ENCODE measurements at regions of chr1 and their contacts with region 1.

Region 1: GRCh38 chr1:62870148-62870547 is 86.2 kb downstream of the ATG4C start:
- DNase-seq: no peak
- H3K4me3 ChIP-seq: no peak overlapping the region
- H3K27ac ChIP-seq: no peak overlapping the region
- H3K4me1 ChIP-seq: no peaks in the 10 kb centered on the region
- H3K27me3 ChIP-seq: no peaks in the 10 kb centered on the region
- CTCF ChIP-seq: no peak

Region 2: DNA sequence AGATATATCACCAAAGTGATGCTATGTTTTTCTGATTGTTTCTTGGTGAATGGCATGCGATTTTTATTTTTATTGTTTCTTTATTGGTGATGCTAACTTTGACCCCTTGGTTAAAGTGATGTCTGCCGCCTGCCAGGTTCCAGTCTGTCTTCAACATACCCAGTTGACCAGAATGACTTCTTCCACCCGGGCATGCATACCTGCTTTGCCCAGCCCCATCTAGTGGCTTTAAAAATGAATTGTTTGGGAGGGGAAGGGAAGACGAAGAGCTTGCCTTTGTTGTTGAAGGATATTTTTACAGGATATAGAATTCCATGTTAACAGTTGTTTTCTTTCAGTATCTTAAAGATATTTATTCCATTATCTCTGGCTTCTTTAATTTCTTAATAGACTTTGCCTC is 21.1 kb before region 1 on chr1:
- CTCF ChIA-PET with region 1: interaction called, 3 read pairs
- POLR2A ChIA-PET with region 1: interaction called, 10 read pairs
- intact Hi-C with region 1: no loop called
- DNase-seq: no peak
- H3K4me3 ChIP-seq: no peak overlapping the region
- H3K27ac ChIP-seq: no peak overlapping the region
- H3K4me1 ChIP-seq: no peaks in the 10 kb centered on the region
- H3K27me3 ChIP-seq: no peaks in the 10 kb centered on the region
- CTCF ChIP-seq: no peak

Region 3: DNA sequence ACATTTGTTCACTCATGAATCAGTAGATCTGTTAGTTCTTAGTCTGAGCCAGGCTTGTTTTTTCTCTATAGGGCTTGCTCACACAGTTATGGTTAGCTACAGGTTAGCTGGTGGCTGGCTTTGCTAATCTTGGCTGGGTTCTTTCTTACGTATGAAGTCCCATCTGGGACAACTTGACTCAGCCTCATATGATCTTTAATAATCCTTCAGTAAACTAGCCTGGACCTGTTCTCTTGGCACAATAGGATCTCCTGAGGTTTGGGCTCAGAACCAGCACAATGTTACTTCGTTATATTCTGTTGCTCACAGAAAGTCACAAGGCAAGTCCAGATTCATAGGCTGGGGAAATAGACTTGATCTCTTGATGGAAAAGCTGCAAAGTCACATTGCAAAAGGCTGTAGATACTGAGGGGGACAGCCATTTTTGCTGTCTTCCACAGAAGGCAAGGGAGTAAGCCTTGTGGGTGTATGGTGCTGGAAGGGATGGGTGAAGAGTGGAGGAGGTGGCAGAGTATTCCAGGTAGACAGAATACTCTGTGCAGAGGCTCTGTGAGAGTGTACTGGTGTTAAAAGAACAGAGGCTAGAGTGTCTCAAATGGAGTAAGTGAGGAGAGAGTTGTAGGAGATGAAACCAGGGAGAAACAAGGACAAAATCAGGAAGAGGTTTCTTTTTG is 677.6 kb after region 1 on chr1:
- CTCF ChIA-PET with region 1: no interaction called
- POLR2A ChIA-PET with region 1: interaction called, 21 read pairs
- intact Hi-C with region 1: no loop called
- DNase-seq: no peak
- H3K4me3 ChIP-seq: no peak overlapping the region
- H3K27ac ChIP-seq: no peak overlapping the region
- H3K4me1 ChIP-seq: no peaks in the 10 kb centered on the region
- H3K27me3 ChIP-seq: no peaks in the 10 kb centered on the region
- CTCF ChIP-seq: no peak

Measured in PC-9 (cell line).